Ascending aorta (tissue), 2 donors: ENCODE measurements at regions of chr7 and their contacts with region 1.

Region 1: GRCh38 chr7:19117091-19117869 is at the start of gene TWIST1:
- DNase-seq: peak in 1 of 2 donors; percentile 88
- H3K4me3 ChIP-seq: peak within 1 kb of the TSS; percentile 81 to 82
- H3K27ac ChIP-seq: peak within 1 kb of the TSS; percentile 78 to 89
- H3K4me1 ChIP-seq: peaks cover 0 to 13% of the 10 kb centered on the region in 2 donors
- H3K27me3 ChIP-seq: no peaks in the 10 kb centered on the region
- CTCF ChIP-seq: peak in 1 of 3 experiments; percentile 22
- total RNA-seq, gene TWIST1: 2.0 TPM

Region 2: GRCh38 chr7:18352339-18353255 is 764.7 kb before region 1 on chr7:
- intact Hi-C with region 1: loop called (anchors 5 kb)
- DNase-seq: peak in 1 of 2 donors; percentile 66
- H3K4me3 ChIP-seq: peak overlapping the region in 1 of 2 donors; percentile 10
- H3K27ac ChIP-seq: no peak overlapping the region
- H3K4me1 ChIP-seq: peaks cover 0 to 11% of the 10 kb centered on the region in 2 donors
- H3K27me3 ChIP-seq: no peaks in the 10 kb centered on the region
- CTCF ChIP-seq: peak; percentile 38 to 69 (median 52)

Region 3: GRCh38 chr7:18570890-18571478 is 546.3 kb before region 1 on chr7:
- intact Hi-C with region 1: loop called (anchors 10 kb)
- DNase-seq: no peak
- H3K4me3 ChIP-seq: peak overlapping the region; percentile 28 to 51
- H3K27ac ChIP-seq: peak overlapping the region; percentile 41 to 50
- H3K4me1 ChIP-seq: peaks cover 0 to 31% of the 10 kb centered on the region in 2 donors
- H3K27me3 ChIP-seq: no peaks in the 10 kb centered on the region
- CTCF ChIP-seq: peak; percentile 12 to 55 (median 40)

Region 4: DNA sequence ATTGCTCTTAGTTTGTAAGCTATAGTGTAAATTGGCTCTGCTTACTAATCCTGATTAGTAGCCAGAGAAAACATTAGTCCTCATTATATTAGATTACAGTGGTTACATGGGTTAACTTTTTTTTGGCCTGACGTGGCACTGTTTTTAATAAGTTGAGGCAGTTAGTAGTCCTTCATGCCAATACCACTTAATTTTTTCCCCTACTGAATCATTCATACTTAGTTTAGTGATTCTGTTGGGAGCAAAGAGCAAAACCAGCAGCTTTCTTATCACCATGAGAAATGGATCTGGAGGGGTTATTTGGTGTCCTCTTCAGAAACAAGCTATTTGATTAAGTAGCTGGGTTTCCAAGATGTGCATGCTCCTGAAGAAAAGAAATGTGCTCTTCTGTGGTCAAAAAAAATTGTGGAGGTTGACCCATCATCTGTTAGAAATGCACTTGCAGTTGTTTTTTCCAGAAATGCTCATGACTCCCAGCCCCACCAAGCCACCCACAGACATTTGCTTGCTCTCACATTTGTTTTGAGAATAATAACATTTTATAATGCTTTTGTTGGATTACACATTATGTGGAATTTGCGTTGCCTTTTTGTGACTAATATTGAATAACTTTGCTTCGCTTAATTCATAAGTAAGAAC is 363.2 kb before region 1 on chr7:
- intact Hi-C with region 1: loop called (anchors 5 kb)
- DNase-seq: no peak
- H3K4me3 ChIP-seq: peak overlapping the region in 1 of 2 donors; percentile 1
- H3K27ac ChIP-seq: no peak overlapping the region
- H3K4me1 ChIP-seq: no peaks in the 10 kb centered on the region
- H3K27me3 ChIP-seq: no peaks in the 10 kb centered on the region
- CTCF ChIP-seq: no peak

Region 5: DNA sequence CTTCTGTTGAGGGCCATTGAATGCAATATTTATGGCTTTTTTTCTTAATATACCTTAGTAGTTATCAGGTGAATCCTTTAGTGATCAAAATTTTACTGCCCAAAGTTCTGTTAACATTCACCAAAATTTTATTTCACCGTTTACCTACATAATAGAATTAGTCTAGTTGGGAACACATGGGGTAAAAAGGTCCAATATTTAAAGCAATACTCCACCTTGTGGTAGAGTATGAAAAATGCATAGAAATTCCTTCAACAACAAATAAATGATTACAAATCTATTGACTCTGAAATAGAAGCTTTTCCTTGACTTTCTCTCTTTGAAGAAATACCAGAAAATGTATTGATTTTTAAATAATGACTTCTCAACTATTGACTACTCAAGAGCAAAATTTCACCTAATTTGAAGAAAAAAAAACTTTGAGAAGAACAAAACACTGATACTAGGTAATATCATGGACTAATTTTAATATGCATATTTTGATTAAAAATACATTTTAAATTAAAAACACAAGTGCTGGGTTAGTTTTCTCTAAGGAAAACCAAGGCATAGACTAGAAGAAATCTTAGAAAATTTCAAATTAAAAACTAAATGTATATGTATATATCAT is 548.2 kb after region 1 on chr7:
- intact Hi-C with region 1: loop called (anchors 5 kb)
- DNase-seq: no peak
- H3K4me3 ChIP-seq: no peak overlapping the region
- H3K27ac ChIP-seq: no peak overlapping the region
- H3K4me1 ChIP-seq: no peaks in the 10 kb centered on the region
- H3K27me3 ChIP-seq: no peaks in the 10 kb centered on the region
- CTCF ChIP-seq: peak in 2 of 3 experiments; percentile 50 to 54